Activated CD4-positive, alpha-beta memory T cell treated with anti-CD3 and anti-CD28 coated beads, Interleukin-2, amount 10 ng/mL, durations not matched to agents 7 days and 5 days (primary cell): ENCODE measurements at regions of chr11 and their contacts with region 1.

Region 1: GRCh38 chr11:114262681-114263512 is 33.3 kb upstream of the NNMT start:
- DNase-seq: peak; percentile 24
- H3K4me3 Mint-ChIP-seq: no peak overlapping the region
- H3K27ac Mint-ChIP-seq: no peak overlapping the region
- H3K4me1 Mint-ChIP-seq: no peaks in the 10 kb centered on the region
- H3K27me3 Mint-ChIP-seq: peaks cover 1% of the 10 kb centered on the region

Region 2: GRCh38 chr11:113806406-113806805 is 456.5 kb before region 1 on chr11:
- CTCF ChIA-PET with region 1: interaction called, 16 read pairs
- POLR2A ChIA-PET with region 1: no interaction called
- DNase-seq: no peak
- H3K4me3 Mint-ChIP-seq: no peak overlapping the region
- H3K27ac Mint-ChIP-seq: no peak overlapping the region
- H3K4me1 Mint-ChIP-seq: no peaks in the 10 kb centered on the region
- H3K27me3 Mint-ChIP-seq: no peaks in the 10 kb centered on the region

Region 3: GRCh38 chr11:114001416-114001815 is 261.5 kb before region 1 on chr11:
- CTCF ChIA-PET with region 1: interaction called, 217 read pairs
- POLR2A ChIA-PET with region 1: no interaction called
- DNase-seq: no peak
- H3K4me3 Mint-ChIP-seq: no peak overlapping the region
- H3K27ac Mint-ChIP-seq: no peak overlapping the region
- H3K4me1 Mint-ChIP-seq: no peaks in the 10 kb centered on the region
- H3K27me3 Mint-ChIP-seq: peaks cover 17% of the 10 kb centered on the region

Region 4: DNA sequence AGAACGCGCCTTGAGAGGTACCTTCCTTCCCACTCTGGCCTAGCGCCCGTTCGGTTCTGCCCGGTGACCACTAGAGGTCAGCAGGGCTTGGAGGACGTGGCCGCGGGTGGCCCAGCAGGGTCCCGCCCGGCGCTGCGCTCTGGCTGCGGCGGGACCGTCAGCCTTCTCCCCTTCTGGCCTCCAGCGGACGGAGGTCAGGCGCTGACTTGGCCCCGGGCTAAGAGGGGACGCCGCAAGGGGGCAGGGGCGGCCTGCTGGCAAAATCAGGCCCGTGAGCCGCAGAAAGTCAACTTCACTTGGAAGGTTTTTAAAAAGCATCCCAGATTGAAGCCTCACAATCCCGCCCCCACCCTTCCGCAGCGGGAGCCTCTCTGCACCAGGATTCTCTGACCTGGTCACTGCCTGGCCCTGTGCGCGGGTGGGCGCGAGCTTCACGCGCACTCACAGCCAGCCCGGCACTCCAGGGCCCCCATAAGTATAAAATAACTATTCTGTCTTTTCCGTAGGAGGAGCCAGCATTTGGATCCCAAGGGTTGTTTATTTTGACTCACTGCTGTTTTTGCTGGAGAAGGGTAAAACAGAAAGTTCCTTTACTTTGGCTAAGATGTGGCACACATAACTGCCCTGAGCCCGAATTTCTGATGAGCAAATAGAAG is 226.6 kb before region 1 on chr11:
- CTCF ChIA-PET with region 1: interaction called, 148 read pairs
- POLR2A ChIA-PET with region 1: no interaction called
- DNase-seq: peak; percentile 58
- H3K4me3 Mint-ChIP-seq: no peak overlapping the region
- H3K27ac Mint-ChIP-seq: no peak overlapping the region
- H3K4me1 Mint-ChIP-seq: peaks cover 7% of the 10 kb centered on the region
- H3K27me3 Mint-ChIP-seq: peaks cover 19% of the 10 kb centered on the region

Region 5: DNA sequence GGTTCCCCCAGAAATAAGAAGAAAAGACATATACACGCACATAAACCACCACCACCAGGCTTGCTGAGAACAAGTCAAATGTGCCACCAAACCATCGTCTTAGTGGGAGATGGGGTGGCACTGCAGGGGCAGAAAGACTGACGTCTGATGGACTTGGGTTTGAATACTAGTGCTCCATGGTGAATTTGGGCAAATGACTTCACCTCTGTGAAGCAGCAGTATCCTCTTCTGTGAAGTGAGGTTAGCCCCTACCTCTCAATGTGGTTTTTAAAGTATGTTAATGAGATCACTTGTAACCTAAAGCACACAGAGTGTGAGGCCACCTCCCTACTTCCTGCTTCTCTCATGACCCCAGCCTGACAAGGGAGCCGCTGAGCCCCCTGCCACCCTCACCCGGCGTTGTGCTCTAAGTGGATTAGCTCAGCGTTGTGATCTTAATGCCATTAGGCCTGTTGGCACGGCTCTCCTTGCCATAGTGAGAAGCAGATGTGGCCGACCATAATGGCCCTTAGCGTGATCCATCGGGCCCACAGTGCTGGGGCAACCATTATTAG is 189.0 kb before region 1 on chr11:
- CTCF ChIA-PET with region 1: interaction called, 13 read pairs
- POLR2A ChIA-PET with region 1: no interaction called
- DNase-seq: no peak
- H3K4me3 Mint-ChIP-seq: no peak overlapping the region
- H3K27ac Mint-ChIP-seq: peak overlapping the region; percentile 84
- H3K4me1 Mint-ChIP-seq: peaks cover 60% of the 10 kb centered on the region
- H3K27me3 Mint-ChIP-seq: peaks cover 8% of the 10 kb centered on the region

Region 6: GRCh38 chr11:114180301-114181055 is 82.4 kb before region 1 on chr11:
- CTCF ChIA-PET with region 1: interaction called, 12 read pairs
- POLR2A ChIA-PET with region 1: interaction called, 7 read pairs
- DNase-seq: no peak
- H3K4me3 Mint-ChIP-seq: no peak overlapping the region
- H3K27ac Mint-ChIP-seq: no peak overlapping the region
- H3K4me1 Mint-ChIP-seq: peaks cover 70% of the 10 kb centered on the region
- H3K27me3 Mint-ChIP-seq: peaks cover 1% of the 10 kb centered on the region

Region 7: GRCh38 chr11:114273071-114273470 is 10.2 kb after region 1 on chr11:
- CTCF ChIA-PET with region 1: interaction called, 15 read pairs
- POLR2A ChIA-PET with region 1: no interaction called
- DNase-seq: no peak
- H3K4me3 Mint-ChIP-seq: no peak overlapping the region
- H3K27ac Mint-ChIP-seq: no peak overlapping the region
- H3K4me1 Mint-ChIP-seq: no peaks in the 10 kb centered on the region
- H3K27me3 Mint-ChIP-seq: peaks cover 54% of the 10 kb centered on the region

Region 8: GRCh38 chr11:114377612-114378267 is 114.8 kb after region 1 on chr11:
- CTCF ChIA-PET with region 1: no interaction called
- POLR2A ChIA-PET with region 1: no interaction called
- DNase-seq: no peak
- H3K4me3 Mint-ChIP-seq: no peak overlapping the region
- H3K27ac Mint-ChIP-seq: no peak overlapping the region
- H3K4me1 Mint-ChIP-seq: peaks cover 3% of the 10 kb centered on the region
- H3K27me3 Mint-ChIP-seq: peaks cover 24% of the 10 kb centered on the region

Region 9: GRCh38 chr11:114511538-114511937 is 248.6 kb after region 1 on chr11:
- CTCF ChIA-PET with region 1: no interaction called
- POLR2A ChIA-PET with region 1: no interaction called
- DNase-seq: no peak
- H3K4me3 Mint-ChIP-seq: no peak overlapping the region
- H3K27ac Mint-ChIP-seq: no peak overlapping the region
- H3K4me1 Mint-ChIP-seq: no peaks in the 10 kb centered on the region
- H3K27me3 Mint-ChIP-seq: peaks cover 14% of the 10 kb centered on the region